ENCODE measurements at regions of chr19 and their contacts with region 1.

Region 1: DNA sequence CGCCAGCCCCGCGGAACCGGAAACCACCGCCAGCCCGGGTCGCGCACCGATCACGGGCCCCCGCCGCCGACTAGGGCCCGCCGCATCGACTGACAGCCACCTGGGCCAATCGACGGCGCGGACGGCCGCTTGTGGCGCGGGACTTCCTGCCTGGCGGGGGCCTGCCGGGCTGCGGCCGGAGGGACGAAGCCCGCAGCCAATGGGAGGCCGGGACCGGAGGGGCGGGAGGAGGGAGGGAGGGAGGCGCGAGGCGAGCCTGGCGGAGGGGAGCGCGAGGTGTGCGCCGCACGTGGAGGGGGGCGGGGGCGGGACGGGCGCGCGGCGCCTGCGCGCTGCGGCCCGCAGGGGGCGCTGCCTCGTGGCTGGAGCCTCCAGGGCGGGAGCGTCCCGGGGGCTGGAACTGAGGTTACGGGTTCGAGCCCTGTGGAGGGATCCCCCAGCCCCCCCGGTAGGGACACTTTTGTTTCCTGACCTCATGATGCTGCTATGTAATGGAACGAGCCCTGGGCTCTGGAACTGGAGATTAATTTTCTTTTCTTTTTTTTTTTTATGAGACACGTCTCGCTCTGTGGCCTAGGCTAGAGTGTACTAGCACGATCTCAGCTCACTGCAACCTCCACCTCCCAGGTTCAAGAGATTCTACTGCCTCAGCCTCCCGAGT is at the start of gene MLLT1:
- DNase-seq: peak; percentile 98 to 100 (median 100)
- ATAC-seq: peak; percentile 97
- H3K4me3 ChIP-seq: peak within 1 kb of the TSS; percentile 98
- H3K27ac ChIP-seq: peak within 1 kb of the TSS; percentile 79
- H3K4me1 ChIP-seq: peaks cover 35 to 38% of the 10 kb centered on the region in 2 experiments
- H3K27me3 ChIP-seq: no peaks in the 10 kb centered on the region
- CTCF ChIP-seq: peak; percentile 45 to 78 (median 64); a peak in 5 of 6 replicates
- EP300 ChIP-seq: peak; percentile 21; the same call in 1 of the 2 replicates
- POLR2A ChIP-seq: no peak
- RAD21 ChIP-seq: peak; percentile 24 to 37; a peak in 2 of 4 replicates
- polyA plus RNA-seq, gene MLLT1: 0.23 to 0.35 TPM

Region 2: GRCh38 chr19:6218491-6219162 is 61.4 kb before region 1 on chr19:
- CTCF ChIA-PET with region 1: no interaction called
- POLR2A ChIA-PET with region 1: no interaction called
- in situ Hi-C with region 1: no loop called
- intact Hi-C with region 1: loop called (anchors 5 kb)
- DNase-seq: peak; percentile 87 to 92 (median 90)
- ATAC-seq: peak; percentile 92
- H3K4me3 ChIP-seq: no peak overlapping the region
- H3K27ac ChIP-seq: no peak overlapping the region; the same call in 2 of the 3 replicates
- H3K4me1 ChIP-seq: peaks cover 15 to 80% of the 10 kb centered on the region in 2 experiments
- H3K27me3 ChIP-seq: no peaks in the 10 kb centered on the region
- CTCF ChIP-seq: peak; percentile 86 to 95 (median 88)
- EP300 ChIP-seq: no peak
- POLR2A ChIP-seq: no peak
- RAD21 ChIP-seq: peak; percentile 75 to 85

Region 3: GRCh38 chr19:6318772-6319171 is 38.7 kb after region 1 on chr19:
- CTCF ChIA-PET with region 1: no interaction called
- POLR2A ChIA-PET with region 1: no interaction called
- in situ Hi-C with region 1: no loop called
- intact Hi-C with region 1: no loop called
- DNase-seq: no peak
- ATAC-seq: no peak
- H3K4me3 ChIP-seq: no peak overlapping the region
- H3K27ac ChIP-seq: no peak overlapping the region
- H3K4me1 ChIP-seq: no peaks in the 10 kb centered on the region
- H3K27me3 ChIP-seq: peaks cover 20 to 49% of the 10 kb centered on the region in 2 experiments
- CTCF ChIP-seq: no peak
- EP300 ChIP-seq: no peak
- POLR2A ChIP-seq: no peak
- RAD21 ChIP-seq: no peak